Activated B cell treated with CpG ODN at 0.5 μM for 24 hours (primary cell): ENCODE measurements at regions of chr7 and their contacts with region 1.

Region 1: GRCh38 chr7:55723621-55723941 is 139.0 kb downstream of the SEPTIN14 start:
- DNase-seq: no peak
- ATAC-seq: no peak
- H3K4me3 Mint-ChIP-seq: no peak overlapping the region
- H3K27ac Mint-ChIP-seq: no peak overlapping the region
- H3K4me1 Mint-ChIP-seq: no peaks in the 10 kb centered on the region
- H3K27me3 Mint-ChIP-seq: peaks cover 2% of the 10 kb centered on the region
- CTCF ChIP-seq: no peak

Region 2: GRCh38 chr7:55509322-55509721 is 214.3 kb before region 1 on chr7:
- CTCF ChIA-PET with region 1: no interaction called
- POLR2A ChIA-PET with region 1: no interaction called
- intact Hi-C with region 1: loop called (anchors 10 kb)
- DNase-seq: no peak
- ATAC-seq: no peak
- H3K4me3 Mint-ChIP-seq: peak overlapping the region; percentile 19
- H3K27ac Mint-ChIP-seq: peak overlapping the region; percentile 73
- H3K4me1 Mint-ChIP-seq: peaks cover 88% of the 10 kb centered on the region
- H3K27me3 Mint-ChIP-seq: no peaks in the 10 kb centered on the region
- CTCF ChIP-seq: no peak